AG04449 (cell line): ENCODE measurements at regions of chr15 and their contacts with region 1.

Region 1: GRCh38 chr15:48494631-48495030 is 150.9 kb downstream of the FBN1 start:
- DNase-seq: no peak
- H3K4me3 ChIP-seq: no peak overlapping the region
- CTCF ChIP-seq: no peak

Region 2: DNA sequence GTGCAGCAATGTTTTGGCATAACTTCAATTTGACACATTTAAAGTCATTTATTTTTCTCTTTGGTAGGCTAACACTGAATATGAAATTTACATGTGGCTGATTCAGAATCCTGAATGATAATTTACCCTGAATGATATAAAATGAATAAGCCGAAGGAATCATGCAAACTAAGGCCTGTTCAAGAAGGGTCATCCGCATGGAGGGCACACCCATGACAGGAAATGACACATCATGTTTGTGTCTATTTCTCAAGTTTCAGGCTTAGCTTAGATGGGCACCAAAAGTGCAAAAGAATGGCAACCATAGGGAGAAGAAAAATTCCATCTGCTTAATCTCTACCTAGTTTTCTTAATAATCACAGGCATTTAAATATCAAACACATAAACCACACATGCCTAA is 21.9 kb before region 1 on chr15:
- CTCF ChIA-PET with region 1: no interaction called
- POLR2A ChIA-PET with region 1: no interaction called
- DNase-seq: no peak
- H3K4me3 ChIP-seq: no peak overlapping the region
- CTCF ChIP-seq: no peak

Region 3: DNA sequence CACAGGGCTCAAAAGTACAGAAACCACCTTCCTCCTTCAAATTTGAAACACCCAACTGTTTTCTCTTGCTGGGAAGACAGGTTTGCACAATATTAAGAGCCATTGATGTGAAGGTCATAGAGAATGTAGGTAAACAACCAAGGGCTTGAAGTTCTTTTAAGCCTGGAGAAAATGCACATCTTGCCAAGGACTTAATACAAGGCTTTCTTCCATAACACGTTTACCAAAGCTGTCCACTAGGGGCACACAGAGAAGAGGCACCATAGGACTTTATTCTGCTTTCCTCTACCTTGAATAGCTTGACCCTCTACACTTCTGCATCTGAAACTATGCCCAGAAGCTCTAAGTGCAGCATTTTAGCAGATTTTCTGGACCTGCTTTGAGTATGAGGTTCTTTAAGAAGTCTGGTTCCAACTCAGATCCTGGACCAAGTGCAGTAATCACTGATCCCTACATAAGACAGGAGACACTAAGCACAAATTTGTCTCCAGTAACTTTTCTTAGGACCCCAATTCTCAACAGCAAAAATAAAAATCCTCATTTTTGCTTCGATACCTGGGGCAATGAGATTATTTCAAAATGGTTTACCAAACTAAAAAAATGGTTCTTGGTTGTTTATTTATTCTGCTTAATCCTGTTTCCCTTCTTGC is 12.9 kb after region 1 on chr15:
- CTCF ChIA-PET with region 1: interaction called, 24 read pairs
- POLR2A ChIA-PET with region 1: interaction called, 4 read pairs
- DNase-seq: no peak
- H3K4me3 ChIP-seq: no peak overlapping the region
- CTCF ChIP-seq: peak; percentile 57